Mammary epithelial cell (primary cell): ENCODE measurements at regions of chr13 and their contacts with region 1.

Region 1: DNA sequence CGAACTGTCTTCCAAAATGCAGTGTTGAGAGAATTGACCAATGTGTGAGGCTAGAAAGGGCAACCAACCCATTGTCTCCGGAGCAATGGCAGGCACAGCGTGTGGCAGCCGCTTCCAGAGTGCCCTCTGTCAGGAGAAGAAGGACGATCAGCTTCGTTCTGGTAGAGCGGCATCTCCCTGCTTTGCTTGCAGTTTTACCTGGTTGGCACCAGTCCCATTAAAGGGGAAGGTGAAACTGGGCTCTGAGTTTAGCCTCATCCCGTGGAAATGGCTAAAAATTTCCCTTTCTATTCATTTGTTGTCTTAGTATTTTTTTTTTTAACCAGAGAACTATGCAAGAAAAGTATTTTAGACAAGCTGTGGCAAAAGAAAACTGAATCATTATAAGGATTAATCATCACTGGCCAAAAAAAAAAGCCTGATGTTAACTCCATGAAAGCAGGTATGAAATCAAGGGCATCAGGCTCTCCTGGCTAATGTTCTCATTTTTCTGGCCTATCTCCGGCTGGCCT is 81.5 kb upstream of the SLC7A1 start:
- DNase-seq: peak; percentile 95
- H3K4me3 ChIP-seq: peak overlapping the region; percentile 6 to 35 (median 21)
- H3K27ac ChIP-seq: peak overlapping the region; percentile 86
- H3K4me1 ChIP-seq: peaks cover 19% of the 10 kb centered on the region
- H3K27me3 ChIP-seq: no peaks in the 10 kb centered on the region
- CTCF ChIP-seq: peak in 1 of 2 donors; percentile 25

Region 2: GRCh38 chr13:29362849-29363604 is 314.0 kb before region 1 on chr13:
- CTCF ChIA-PET with region 1: interaction called, 12 read pairs
- dilution Hi-C with region 1: no loop called
- in situ Hi-C with region 1: no loop called
- intact Hi-C with region 1: no loop called
- DNase-seq: peak; percentile 32
- H3K4me3 ChIP-seq: no peak overlapping the region
- H3K27ac ChIP-seq: no peak overlapping the region
- H3K4me1 ChIP-seq: no peaks in the 10 kb centered on the region
- H3K27me3 ChIP-seq: no peaks in the 10 kb centered on the region
- CTCF ChIP-seq: peak; percentile 97 to 99

Region 3: GRCh38 chr13:29564818-29565217 is 112.2 kb before region 1 on chr13:
- CTCF ChIA-PET with region 1: interaction called, 3 read pairs
- dilution Hi-C with region 1: no loop called
- in situ Hi-C with region 1: no loop called
- intact Hi-C with region 1: loop called (anchors 1 kb)
- DNase-seq: no peak
- H3K4me3 ChIP-seq: no peak overlapping the region
- H3K27ac ChIP-seq: no peak overlapping the region
- H3K4me1 ChIP-seq: peaks cover 33% of the 10 kb centered on the region
- H3K27me3 ChIP-seq: no peaks in the 10 kb centered on the region
- CTCF ChIP-seq: no peak

Region 4: DNA sequence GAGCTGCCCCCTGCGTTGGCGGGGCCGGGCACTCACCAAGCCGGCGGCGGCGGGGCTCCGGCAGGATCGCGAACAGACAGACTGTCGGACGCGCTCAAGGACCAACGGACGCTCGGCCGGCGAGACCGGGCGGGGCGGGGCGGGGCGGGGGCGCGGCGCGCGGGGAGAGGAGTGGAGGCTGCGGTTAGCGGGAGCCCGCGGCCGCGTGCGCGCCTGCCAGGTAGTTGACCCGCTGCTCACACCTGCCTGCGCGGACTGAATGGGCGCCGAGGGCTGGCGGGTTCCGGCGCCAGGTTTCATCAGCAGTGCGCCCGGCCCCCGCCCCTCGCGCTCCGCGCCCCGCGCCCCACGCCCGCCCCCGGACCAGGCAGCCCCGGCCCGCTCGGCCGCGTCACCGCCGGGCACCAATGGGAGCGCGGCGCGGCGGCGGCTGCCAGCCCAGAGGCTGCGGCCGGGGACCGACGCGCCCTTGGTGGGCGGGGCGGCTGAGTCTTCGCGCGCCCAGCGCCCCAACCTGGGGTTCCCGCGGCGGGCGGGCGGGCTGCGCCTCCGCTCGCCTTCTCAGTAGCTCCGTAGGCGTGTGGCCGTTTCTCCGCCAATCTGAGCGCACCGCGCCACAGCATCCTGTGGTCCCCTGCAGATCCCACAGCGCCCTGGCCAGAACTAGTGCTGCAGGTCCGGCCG is 81.5 kb before region 1 on chr13 and contains the start of gene SLC7A1:
- CTCF ChIA-PET with region 1: no interaction called
- dilution Hi-C with region 1: no loop called
- in situ Hi-C with region 1: no loop called
- intact Hi-C with region 1: loop called (anchors 1 kb)
- DNase-seq: peak; percentile 87
- H3K4me3 ChIP-seq: peak within 1 kb of the TSS; percentile 55 to 92 (median 91)
- H3K27ac ChIP-seq: peak within 1 kb of the TSS; percentile 96
- H3K4me1 ChIP-seq: peaks cover 19% of the 10 kb centered on the region
- H3K27me3 ChIP-seq: no peaks in the 10 kb centered on the region
- CTCF ChIP-seq: no peak
- total RNA-seq, gene SLC7A1: 82.7 to 176 TPM

Region 5: GRCh38 chr13:29613101-29613500 is 63.9 kb before region 1 on chr13:
- CTCF ChIA-PET with region 1: no interaction called
- dilution Hi-C with region 1: loop called (anchors 5 kb)
- in situ Hi-C with region 1: no loop called
- intact Hi-C with region 1: no loop called
- DNase-seq: no peak
- H3K4me3 ChIP-seq: no peak overlapping the region
- H3K27ac ChIP-seq: no peak overlapping the region
- H3K4me1 ChIP-seq: no peaks in the 10 kb centered on the region
- H3K27me3 ChIP-seq: peaks cover 6% of the 10 kb centered on the region
- CTCF ChIP-seq: no peak

Region 6: GRCh38 chr13:29702912-29703351 is 25.9 kb after region 1 on chr13:
- CTCF ChIA-PET with region 1: no interaction called
- dilution Hi-C with region 1: no loop called
- in situ Hi-C with region 1: no loop called
- intact Hi-C with region 1: loop called (anchors 2 kb)
- DNase-seq: peak; percentile 90
- H3K4me3 ChIP-seq: no peak overlapping the region
- H3K27ac ChIP-seq: no peak overlapping the region
- H3K4me1 ChIP-seq: no peaks in the 10 kb centered on the region
- H3K27me3 ChIP-seq: no peaks in the 10 kb centered on the region
- CTCF ChIP-seq: no peak

Region 7: GRCh38 chr13:29948244-29948643 is 271.2 kb after region 1 on chr13:
- CTCF ChIA-PET with region 1: no interaction called
- dilution Hi-C with region 1: no loop called
- in situ Hi-C with region 1: no loop called
- intact Hi-C with region 1: no loop called
- DNase-seq: no peak
- H3K4me3 ChIP-seq: no peak overlapping the region
- H3K27ac ChIP-seq: no peak overlapping the region
- H3K4me1 ChIP-seq: no peaks in the 10 kb centered on the region
- H3K27me3 ChIP-seq: no peaks in the 10 kb centered on the region
- CTCF ChIP-seq: no peak